ENCODE measurements at regions of chr2 and their contacts with region 1.

Region 1: DNA sequence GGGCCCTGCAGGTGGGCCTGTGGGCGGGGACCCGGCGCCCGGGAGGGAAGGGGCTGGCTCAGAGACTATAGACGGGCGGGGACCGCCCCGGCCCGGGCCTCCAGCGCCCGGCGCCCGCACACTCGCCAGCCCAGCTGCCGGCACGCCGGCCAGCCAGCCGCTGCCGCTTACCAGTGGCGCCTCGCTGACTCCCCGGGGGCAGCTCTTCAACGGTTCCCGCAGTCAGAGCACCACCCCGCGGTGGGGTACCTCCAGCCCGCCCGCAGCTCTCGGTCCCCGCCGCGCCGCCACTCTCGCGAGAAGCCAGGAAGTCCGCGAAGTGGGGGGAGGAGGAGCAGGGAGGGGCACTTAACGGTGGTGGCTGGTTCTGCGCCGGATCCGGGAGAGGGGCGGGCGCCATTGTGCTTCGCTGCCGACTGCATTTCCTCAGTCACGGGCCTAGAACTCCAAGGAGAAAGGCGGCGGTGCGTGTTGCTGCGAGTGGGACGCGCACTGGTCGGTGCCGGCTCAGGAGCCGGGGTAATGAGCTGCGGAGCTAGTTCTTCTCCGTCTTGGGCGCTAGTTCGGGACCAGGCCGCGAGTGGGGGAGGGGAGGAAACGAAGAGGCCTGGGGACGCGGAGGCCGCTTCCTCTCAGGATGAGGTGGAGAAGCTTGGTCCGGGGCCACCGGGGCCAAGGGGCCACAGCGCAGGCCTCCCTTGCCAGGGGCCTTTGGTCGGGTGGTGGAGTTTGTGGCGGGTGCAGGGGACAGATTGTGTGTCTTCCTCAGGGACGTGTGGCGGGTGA is at the start of gene MARCHF7:
- DNase-seq: peak; percentile 96
- H3K4me3 ChIP-seq: peak within 1 kb of the TSS; percentile 80 to 96 (median 94)
- H3K27ac ChIP-seq: peak within 1 kb of the TSS; percentile 86
- H3K4me1 ChIP-seq: peaks cover 28% of the 10 kb centered on the region
- H3K27me3 ChIP-seq: no peaks in the 10 kb centered on the region
- CTCF ChIP-seq: peak; percentile 69 to 77
- POLR2A ChIP-seq: peak; percentile 94
- total RNA-seq, gene MARCHF7: 82.0 and 93.9 TPM in 2 replicates

Region 2: DNA sequence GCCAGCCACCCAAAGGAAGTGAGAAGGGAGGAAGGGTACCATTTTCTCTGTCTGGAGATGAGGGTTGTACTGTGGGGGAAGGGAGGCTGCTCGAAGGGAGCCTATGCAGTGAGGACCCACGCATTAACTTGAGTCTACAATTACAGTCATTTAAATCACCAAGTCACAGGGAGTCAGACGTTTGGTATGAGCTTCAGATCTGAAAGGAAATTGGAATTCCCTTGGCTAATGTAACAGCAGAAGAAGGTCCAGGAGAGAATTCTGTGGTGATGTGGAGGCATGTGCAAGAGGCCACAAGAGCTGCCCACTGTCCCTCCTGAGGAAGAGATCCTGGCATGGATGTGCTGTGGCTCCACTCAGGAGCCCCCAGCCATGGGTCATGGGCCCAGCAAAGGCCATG is 894.7 kb before region 1 on chr2:
- CTCF ChIA-PET with region 1: no interaction called
- POLR2A ChIA-PET with region 1: no interaction called
- dilution Hi-C with region 1: no loop called
- intact Hi-C with region 1: no loop called
- DNase-seq: no peak
- H3K4me3 ChIP-seq: no peak overlapping the region
- H3K27ac ChIP-seq: no peak overlapping the region
- H3K4me1 ChIP-seq: no peaks in the 10 kb centered on the region
- H3K27me3 ChIP-seq: peaks cover 10 to 14% of the 10 kb centered on the region in 2 experiments
- CTCF ChIP-seq: no peak
- POLR2A ChIP-seq: no peak

Region 3: DNA sequence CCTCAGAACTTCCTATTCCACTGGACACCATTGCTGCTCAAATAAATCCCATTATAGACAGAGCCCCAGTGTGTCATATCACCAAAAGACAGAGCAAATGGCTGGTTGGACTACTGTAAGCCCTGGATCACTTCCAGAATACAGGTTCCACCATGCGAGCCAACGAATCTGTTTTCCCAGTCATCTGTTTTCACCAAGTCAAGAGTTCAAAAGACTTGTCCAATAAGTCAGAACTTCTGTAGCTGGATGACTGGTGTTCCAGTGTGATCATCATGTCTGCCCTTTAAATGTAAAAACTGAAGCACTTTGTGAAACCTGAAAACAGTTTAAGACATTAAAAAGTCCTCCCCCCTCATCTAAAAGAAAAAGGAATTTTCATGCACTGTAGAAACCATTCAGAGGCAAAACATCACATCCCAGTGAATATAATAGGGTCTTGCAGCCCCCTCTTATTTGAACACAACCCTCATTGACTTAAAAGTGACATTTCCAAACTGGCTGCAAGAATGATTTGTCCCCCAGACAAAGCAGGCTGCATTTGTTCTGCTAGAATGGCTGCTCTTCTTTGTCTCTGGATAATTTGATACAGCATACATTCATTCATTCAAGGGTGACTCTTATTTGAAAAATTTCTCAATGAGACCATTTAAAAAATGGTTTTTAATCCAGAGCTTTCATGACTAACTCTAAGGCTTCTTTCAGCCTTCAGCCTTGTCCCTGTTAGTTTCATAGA is 808.5 kb before region 1 on chr2:
- CTCF ChIA-PET with region 1: no interaction called
- POLR2A ChIA-PET with region 1: no interaction called
- dilution Hi-C with region 1: no loop called
- intact Hi-C with region 1: loop called (anchors 1 kb)
- DNase-seq: no peak
- H3K4me3 ChIP-seq: no peak overlapping the region
- H3K27ac ChIP-seq: no peak overlapping the region
- H3K4me1 ChIP-seq: no peaks in the 10 kb centered on the region
- H3K27me3 ChIP-seq: no peaks in the 10 kb centered on the region
- CTCF ChIP-seq: no peak
- POLR2A ChIP-seq: no peak

Region 4: DNA sequence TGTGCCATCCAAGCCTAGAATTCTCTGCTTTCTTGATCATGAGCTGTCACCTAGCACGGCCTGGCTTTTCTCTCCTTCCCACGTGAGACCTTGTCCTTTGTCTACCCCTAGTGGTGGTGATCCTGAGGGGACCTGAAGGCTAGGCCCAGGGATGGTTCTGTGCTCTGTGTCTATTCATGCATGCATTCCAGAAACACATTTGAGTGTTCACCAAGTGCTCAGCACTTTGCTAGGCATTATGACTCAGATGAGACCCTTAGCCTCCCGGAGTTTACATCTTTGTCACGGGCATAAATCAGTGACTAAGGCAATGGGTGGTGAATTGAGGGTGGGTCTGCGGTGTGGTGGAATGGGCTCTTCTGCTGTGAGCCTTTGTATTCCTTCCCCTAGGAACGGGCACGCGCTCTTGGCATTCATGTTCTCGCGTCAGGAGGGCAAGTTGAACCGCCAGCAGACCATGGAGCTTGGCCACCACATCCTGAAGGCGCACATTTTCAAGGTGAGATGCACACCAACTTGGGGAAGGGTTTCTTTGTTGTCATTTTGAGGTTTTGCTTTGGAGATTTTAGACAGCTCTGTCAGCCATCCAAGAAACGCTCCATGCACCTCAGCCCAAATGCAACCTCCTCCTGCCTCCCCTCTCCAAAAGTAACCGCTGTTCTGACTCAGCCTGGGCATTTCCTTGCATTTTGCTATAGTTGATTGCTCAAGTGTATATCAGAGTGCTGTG is 526.8 kb before region 1 on chr2:
- CTCF ChIA-PET with region 1: no interaction called
- POLR2A ChIA-PET with region 1: no interaction called
- dilution Hi-C with region 1: no loop called
- intact Hi-C with region 1: loop called (anchors 2 kb)
- DNase-seq: peak; percentile 44
- H3K4me3 ChIP-seq: no peak overlapping the region
- H3K27ac ChIP-seq: no peak overlapping the region
- H3K4me1 ChIP-seq: peaks cover 42% of the 10 kb centered on the region
- H3K27me3 ChIP-seq: no peaks in the 10 kb centered on the region
- CTCF ChIP-seq: peak; percentile 43 to 47
- POLR2A ChIP-seq: no peak

Region 5: GRCh38 chr2:159286709-159287441 is 425.5 kb before region 1 on chr2:
- CTCF ChIA-PET with region 1: interaction called, 8 read pairs
- POLR2A ChIA-PET with region 1: interaction called, 3 read pairs
- dilution Hi-C with region 1: no loop called
- intact Hi-C with region 1: loop called (anchors 1 kb)
- DNase-seq: peak; percentile 96
- H3K4me3 ChIP-seq: peak overlapping the region; percentile 60 to 73 (median 61)
- H3K27ac ChIP-seq: peak overlapping the region; percentile 68
- H3K4me1 ChIP-seq: peaks cover 7% of the 10 kb centered on the region
- H3K27me3 ChIP-seq: no peaks in the 10 kb centered on the region
- CTCF ChIP-seq: no peak
- POLR2A ChIP-seq: peak; percentile 96

Region 6: DNA sequence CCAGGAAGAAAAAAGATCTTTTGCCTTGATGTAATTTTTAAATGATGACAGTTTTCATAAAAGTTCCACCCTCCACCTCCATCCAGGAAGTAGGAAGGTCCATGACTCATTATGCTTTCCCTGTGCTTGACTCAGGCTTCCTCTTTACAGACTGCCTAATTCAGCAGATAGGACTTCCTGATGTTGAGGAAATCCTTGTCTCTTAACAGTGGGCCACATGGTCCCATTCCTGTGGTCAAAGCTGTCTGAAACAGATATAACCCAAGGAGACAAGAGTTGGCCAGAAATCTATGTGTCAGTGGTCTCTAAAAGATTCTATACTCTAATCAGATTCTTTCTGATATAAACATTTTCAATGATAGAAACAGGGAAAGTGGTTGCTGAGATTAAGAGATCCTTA is 215.1 kb before region 1 on chr2:
- CTCF ChIA-PET with region 1: no interaction called
- POLR2A ChIA-PET with region 1: interaction called, 3 read pairs
- dilution Hi-C with region 1: no loop called
- intact Hi-C with region 1: loop called (anchors 1 kb)
- DNase-seq: peak; percentile 93
- H3K4me3 ChIP-seq: peak overlapping the region in 1 of 3 experiments; percentile 2
- H3K27ac ChIP-seq: peak overlapping the region; percentile 83
- H3K4me1 ChIP-seq: peaks cover 21% of the 10 kb centered on the region
- H3K27me3 ChIP-seq: no peaks in the 10 kb centered on the region
- CTCF ChIP-seq: no peak
- POLR2A ChIP-seq: no peak

Region 7: DNA sequence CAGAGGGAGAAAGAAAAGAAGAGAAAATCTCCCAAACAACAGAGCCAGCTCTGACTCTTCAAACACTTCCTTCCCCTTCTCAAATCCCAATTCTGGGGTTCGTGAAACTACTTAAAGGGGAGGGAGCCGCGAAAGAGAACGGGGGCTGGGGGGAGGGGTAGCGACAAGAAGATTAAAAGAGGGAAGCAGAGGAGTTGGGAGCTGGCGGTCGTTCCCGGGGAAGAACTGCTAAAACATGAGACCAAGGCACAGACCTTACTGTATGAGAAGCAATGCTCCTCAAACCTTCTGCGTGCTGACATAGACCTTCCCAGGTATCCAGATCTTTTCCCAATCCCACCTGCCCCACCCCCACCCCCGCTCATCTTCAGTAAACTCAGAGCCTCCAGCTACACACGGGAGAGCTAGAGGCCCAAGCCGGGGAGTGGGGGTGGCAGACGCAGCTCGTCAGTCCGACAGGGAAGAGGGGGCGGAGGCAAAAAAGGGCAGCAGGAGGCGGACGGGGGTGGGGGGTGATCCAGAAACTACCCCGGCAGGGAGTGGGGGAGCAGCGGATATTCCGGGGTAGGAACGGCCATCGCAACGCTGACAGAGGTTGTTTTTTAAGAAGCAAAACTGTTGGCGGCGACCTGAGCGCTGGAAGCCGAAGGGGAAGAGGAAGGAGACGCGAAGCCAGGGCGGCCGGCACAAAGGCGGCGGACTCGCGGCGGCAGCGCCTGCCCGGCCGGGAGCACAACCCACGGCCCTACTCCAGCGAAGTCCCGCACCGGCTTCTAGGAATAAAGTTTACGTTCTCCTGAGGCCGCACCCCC is 97.0 kb before region 1 on chr2:
- CTCF ChIA-PET with region 1: interaction called, 6 read pairs
- POLR2A ChIA-PET with region 1: interaction called, 18 read pairs
- dilution Hi-C with region 1: loop called (anchors 25 kb)
- intact Hi-C with region 1: loop called (anchors 1 kb)
- DNase-seq: peak; percentile 96
- H3K4me3 ChIP-seq: peak overlapping the region; percentile 49 to 100 (median 100)
- H3K27ac ChIP-seq: peak overlapping the region; percentile 100
- H3K4me1 ChIP-seq: peaks cover 30% of the 10 kb centered on the region
- H3K27me3 ChIP-seq: no peaks in the 10 kb centered on the region
- CTCF ChIP-seq: no peak
- POLR2A ChIP-seq: peak; percentile 82

Region 8: DNA sequence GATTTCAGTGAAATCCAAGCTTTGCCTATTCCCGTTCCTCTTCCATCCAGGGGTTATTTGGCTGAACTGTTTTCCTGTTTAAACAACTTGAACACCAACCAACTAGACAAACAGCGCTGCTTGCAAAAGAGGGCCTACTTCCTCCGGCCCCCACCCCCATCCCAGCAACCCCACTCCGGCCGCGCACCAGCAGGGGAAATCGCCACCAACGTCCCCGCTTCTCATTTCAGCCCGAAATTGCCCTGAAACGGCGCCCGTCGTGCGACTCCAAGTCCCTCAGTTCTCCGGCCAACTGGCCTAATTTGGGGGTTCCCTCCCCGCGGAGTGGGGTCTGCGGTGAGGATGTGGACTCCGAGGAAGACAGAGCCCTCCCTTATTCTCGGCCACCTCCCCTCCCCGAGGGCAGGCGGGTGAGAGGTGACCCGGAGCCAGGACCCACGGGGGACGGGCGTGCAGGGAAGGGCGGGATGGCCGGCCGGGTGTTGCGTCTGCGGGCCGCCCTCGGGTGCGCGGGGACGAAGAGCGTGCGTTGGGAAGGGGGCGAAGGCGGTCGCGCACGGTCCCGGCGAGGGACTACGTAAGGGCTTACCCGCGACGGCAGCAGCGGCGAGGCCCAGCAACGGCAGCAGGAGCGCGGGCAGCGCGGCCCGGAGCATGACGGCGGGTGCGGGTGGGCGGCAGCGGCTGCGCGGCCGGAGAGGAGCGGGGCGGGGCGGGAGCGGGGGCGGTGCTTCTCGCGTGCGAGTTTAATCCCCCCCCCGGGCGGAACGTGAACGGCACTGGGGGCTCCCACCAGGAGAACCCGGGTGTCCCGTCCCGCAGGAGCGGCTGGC is 85.4 kb after region 1 on chr2 and contains the start of gene CD302:
- CTCF ChIA-PET with region 1: no interaction called
- POLR2A ChIA-PET with region 1: no interaction called
- dilution Hi-C with region 1: no loop called
- intact Hi-C with region 1: loop called (anchors 5 kb)
- DNase-seq: peak; percentile 75
- H3K4me3 ChIP-seq: peak within 1 kb of the TSS; percentile 51 to 84 (median 77)
- H3K27ac ChIP-seq: peak within 1 kb of the TSS; percentile 48
- H3K4me1 ChIP-seq: peaks cover 33% of the 10 kb centered on the region
- H3K27me3 ChIP-seq: no peaks in the 10 kb centered on the region
- CTCF ChIP-seq: no peak
- POLR2A ChIP-seq: peak; percentile 72
- total RNA-seq, gene CD302: 10.6 and 11.5 TPM in 2 replicates

Measured in endothelial cell of umbilical vein (primary cell).